A549 (cell line): ENCODE measurements at regions of chr22 and their contacts with region 1.

Region 1: GRCh38 chr22:22498267-22498666 is 10.3 kb downstream of the ZNF280B start:
- DNase-seq: no peak
- ATAC-seq: no peak
- H3K4me3 ChIP-seq: no peak overlapping the region
- H3K27ac ChIP-seq: no peak overlapping the region
- H3K4me1 ChIP-seq: no peaks in the 10 kb centered on the region
- CTCF ChIP-seq: no peak
- EP300 ChIP-seq: no peak
- POLR2A ChIP-seq: no peak
- RAD21 ChIP-seq: no peak

Region 2: DNA sequence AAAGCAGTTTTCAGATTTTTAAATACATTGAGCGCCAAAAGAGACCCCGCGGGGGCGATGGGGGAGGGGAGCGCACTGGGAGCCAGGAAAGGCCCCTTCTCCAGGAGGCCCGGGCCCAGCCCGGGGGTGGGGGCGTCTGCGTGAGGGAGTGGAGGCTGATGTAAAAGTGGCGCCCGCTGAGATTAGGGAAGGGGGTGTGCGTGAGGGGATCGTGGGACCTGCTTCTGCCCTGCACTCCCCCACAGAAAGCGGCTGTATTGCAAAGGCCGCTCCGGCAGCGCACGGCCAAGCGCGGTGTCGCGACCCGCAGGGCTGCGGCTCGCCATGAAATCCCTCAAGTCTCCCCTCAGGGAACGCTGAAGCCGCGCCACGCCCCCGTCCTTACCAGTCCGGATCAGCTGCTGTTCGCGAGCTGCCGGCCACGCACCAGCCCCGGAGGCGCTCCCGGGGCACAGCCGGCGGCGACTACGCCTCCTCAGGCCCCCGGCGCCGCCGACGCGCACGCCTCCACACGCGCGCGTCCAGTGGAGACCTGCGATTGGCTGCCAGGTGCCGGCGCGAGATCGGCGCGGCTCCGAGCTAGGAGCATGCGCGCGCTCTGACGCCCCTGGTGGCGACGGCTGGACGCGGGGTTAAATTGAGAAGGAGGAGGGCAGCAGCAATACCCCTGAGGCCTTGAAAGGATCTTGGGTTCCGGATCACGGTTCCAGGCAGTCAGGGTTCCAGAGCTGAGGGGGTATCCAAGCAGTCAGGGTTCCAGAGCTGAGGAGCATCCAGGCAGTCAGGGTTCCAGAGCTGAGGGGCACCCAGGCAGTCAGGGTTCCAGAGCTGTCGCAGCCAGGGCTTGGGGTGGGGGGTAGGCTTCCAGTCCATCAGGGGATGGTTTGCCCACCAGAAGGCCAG is 10.3 kb after region 1 on chr22 and contains the start of gene ZNF280B:
- CTCF ChIA-PET with region 1: interaction called, 12 read pairs
- POLR2A ChIA-PET with region 1: interaction called, 4 read pairs
- DNase-seq: peak; percentile 44 to 85
- ATAC-seq: peak; percentile 99 to 100
- H3K4me3 ChIP-seq: peak within 1 kb of the TSS; percentile 87
- H3K27ac ChIP-seq: peak within 1 kb of the TSS; percentile 77 to 91
- H3K4me1 ChIP-seq: no peaks in the 10 kb centered on the region
- CTCF ChIP-seq: peak; percentile 48
- EP300 ChIP-seq: no peak
- POLR2A ChIP-seq: peak; percentile 59
- RAD21 ChIP-seq: no peak
- polyA plus RNA-seq, gene ZNF280B: 3.9 and 5.1 TPM in 2 replicates